ENCODE measurements at regions of chr21 and their contacts with region 1.

Region 1: GRCh38 chr21:32403201-32403777 is 9.2 kb upstream of the EVA1C start:
- DNase-seq: peak in 1 of 2 donors; percentile 68
- ATAC-seq: peak; percentile 85
- H3K4me3 ChIP-seq: no peak overlapping the region
- H3K27ac ChIP-seq: no peak overlapping the region
- H3K4me1 ChIP-seq: no peaks in the 10 kb centered on the region
- H3K27me3 ChIP-seq: no peaks in the 10 kb centered on the region

Region 2: DNA sequence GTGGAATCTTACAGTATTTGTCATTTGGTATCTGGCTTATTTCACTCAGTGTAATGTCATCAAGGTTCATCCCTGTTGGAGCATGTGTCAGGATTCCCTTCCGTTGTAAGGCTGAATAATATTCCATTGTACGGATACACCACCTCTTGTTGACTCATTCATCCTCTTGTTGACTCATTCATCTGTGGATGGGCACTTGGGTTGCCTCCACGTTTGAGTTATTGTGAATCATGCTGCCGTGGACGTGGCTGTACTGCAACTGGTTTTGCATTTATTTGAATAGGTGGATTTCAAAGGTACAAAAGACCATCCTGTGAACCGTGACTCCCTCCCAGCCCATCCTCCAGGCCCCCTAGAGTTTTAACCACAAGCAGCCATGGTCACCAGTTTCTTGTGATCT is 193.9 kb after region 1 on chr21:
- intact Hi-C with region 1: loop called (anchors 2 to 5 kb)
- DNase-seq: no peak
- ATAC-seq: no peak
- H3K4me3 ChIP-seq: no peak overlapping the region
- H3K27ac ChIP-seq: no peak overlapping the region
- H3K4me1 ChIP-seq: no peaks in the 10 kb centered on the region
- H3K27me3 ChIP-seq: no peaks in the 10 kb centered on the region